PC-9 (cell line): ENCODE measurements at regions of chr18 and their contacts with region 1.

Region 1: GRCh38 chr18:70301667-70302066 is 12.8 kb downstream of the SOCS6 start:
- DNase-seq: no peak
- H3K4me3 ChIP-seq: no peak overlapping the region
- H3K27ac ChIP-seq: no peak overlapping the region
- H3K4me1 ChIP-seq: 0 out of 2 replicates have a peak, but pooled peaks cover 8% of the 10 kb centered on the region
- H3K27me3 ChIP-seq: no peaks in the 10 kb centered on the region
- CTCF ChIP-seq: no peak

Region 2: GRCh38 chr18:70384181-70384790 is 82.6 kb after region 1 on chr18:
- CTCF ChIA-PET with region 1: no interaction called
- POLR2A ChIA-PET with region 1: interaction called, 16 read pairs
- intact Hi-C with region 1: no loop called
- DNase-seq: peak; percentile 76 to 97
- H3K4me3 ChIP-seq: peak overlapping the region; percentile 48; the same call in 1 of the 2 replicates
- H3K27ac ChIP-seq: peak overlapping the region; percentile 77
- H3K4me1 ChIP-seq: peaks cover 34% of the 10 kb centered on the region
- H3K27me3 ChIP-seq: no peaks in the 10 kb centered on the region
- CTCF ChIP-seq: no peak

Region 3: GRCh38 chr18:70645971-70646370 is 344.3 kb after region 1 on chr18:
- CTCF ChIA-PET with region 1: no interaction called
- POLR2A ChIA-PET with region 1: no interaction called
- intact Hi-C with region 1: no loop called
- DNase-seq: no peak
- H3K4me3 ChIP-seq: no peak overlapping the region
- H3K27ac ChIP-seq: no peak overlapping the region
- H3K4me1 ChIP-seq: no peaks in the 10 kb centered on the region
- H3K27me3 ChIP-seq: no peaks in the 10 kb centered on the region
- CTCF ChIP-seq: no peak